Head of caudate nucleus (tissue), 42 donors: ENCODE measurements at regions of chr4 and their contacts with region 1.

Region 1: GRCh38 chr4:26404743-26405206 is 84.0 kb downstream of the RBPJ start:
- DNase-seq: no peak

Region 2: DNA sequence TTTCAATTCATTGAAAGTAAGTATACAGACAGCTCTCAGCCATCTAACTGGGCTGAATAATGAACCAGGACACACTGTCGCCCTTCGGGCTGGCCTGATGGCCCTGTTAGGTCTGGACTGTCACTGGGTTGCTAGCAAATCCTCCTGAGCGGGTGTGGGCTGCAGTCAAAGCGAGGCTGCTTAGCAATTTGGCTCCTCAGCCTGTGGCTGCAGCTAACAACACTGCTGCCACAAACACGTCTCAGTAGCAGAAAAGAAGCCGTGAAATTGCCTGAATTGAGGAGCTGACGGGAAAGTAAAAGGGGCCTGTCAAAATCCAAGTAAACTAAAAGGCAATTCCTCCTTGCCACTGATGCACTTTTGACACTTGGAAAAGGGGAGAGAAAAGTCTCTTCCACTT is 418.0 kb before region 1 on chr4:
- intact Hi-C with region 1: loop called (anchors 5 kb)
- DNase-seq: peak in 15 of 42 donors; percentile 15 to 60 (median 31)

Region 3: DNA sequence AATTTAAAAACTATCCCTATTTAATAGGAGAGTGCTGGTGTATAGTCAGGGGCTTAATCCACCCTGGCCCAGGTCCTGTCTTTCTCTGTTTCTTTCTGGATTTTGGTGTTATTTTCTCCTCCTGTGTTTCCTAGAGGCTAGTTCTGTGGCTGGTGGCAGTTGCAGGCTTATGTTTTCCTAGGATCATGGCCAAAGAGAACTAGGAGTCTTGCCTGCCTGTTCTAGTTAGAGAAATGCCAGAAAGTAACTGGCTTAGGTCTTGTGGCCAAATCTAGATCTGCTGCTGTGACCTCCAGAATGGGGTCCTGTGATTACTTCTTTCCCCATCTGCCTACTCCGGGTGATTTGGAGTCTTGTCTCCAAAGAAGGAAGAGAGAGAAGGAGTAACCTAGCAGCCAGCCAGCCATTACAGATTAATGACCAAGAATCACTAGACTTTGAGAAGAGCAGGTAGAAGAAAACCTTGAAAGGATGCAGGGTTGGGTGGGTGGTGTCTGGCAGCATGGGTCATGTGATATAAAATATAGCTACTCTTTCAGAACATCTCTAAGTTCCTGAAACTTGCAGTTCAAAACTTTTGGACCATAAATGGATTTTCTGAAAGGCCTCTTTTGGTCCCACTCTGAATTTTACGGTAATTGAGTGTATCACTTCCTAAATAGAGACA is 573.7 kb after region 1 on chr4:
- intact Hi-C with region 1: no loop called
- DNase-seq: no peak